Cardiac septum (tissue), 1 donor: ENCODE measurements at regions of chr3 and their contacts with region 1.

Region 1: DNA sequence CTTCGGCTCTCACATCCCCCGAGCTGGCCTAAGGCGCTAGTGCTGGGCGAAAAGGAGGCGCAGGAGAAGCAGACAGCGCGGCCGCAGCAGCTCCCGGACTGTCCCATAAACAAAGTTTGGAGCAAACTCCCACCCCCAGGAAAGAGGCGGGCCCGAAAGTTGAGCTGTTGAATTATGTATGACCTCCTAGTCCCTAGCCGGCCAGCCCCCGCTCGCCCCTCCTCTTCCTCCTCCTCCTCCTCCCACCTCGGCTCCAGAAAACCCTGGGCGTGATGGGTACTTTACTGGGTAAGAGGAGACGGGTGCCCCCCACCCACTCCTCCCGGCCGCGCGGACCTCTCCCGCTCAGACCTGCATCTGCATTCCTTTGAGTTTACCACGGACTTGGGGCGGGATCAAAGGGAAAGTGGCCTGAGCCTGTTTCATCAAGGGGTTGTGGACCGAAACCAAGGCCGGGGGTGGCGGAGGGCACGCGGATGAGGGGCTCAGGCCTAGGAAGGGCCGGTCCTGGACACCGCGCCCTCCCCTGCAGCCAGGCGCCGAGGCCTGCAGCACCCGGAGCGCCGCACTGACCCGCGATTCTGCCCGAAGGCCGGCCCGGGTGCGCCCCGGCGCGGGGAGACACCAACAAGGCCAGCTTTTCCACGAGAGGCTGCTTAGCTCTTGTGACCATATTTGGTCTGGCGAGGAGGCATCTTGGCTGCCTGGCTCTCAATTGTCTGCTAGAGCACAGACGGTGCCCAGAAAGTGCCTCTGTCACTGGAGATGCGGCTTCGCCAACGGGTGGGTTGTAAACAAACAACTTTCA is at the start of gene WWTR1:
- DNase-seq: peak; percentile 96
- total RNA-seq, gene WWTR1: 82.7 TPM

Region 2: GRCh38 chr3:149366941-149367840 is 290.9 kb before region 1 on chr3:
- intact Hi-C with region 1: no loop called
- DNase-seq: no peak

Region 3: DNA sequence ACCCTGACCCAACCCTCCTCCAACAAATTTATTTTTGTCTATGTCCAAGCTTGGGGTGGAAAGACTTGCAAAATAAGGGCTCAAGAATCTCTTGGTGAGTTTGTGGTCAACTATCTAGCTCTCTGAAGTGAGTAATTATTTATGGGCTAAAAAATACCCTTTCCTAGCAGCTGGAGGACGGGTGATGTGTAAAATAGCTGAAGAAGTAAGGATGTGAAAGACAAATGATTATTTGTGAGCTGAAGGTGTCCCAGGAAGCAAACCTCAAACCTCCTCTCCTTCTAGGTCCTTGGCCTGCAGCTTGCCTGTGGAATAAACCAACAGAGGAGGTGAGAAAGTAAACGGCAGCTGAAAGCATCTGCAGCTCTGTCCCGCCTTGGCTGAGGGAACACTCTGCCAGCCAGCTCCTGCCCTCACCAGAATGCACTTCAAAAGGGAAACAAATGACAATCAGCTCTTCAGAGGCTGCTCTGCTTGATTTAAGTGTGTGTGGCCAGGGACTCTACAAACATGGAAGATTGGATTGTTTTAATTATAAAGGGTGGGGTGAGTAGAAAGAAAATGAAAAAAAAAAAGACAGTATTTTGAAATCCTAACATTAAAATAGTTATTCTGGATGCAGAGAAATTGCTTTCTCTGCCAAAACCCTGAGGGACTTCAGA is 123.3 kb before region 1 on chr3:
- intact Hi-C with region 1: loop called (anchors 5 kb)
- DNase-seq: no peak

Region 4: GRCh38 chr3:149575961-149576564 is 82.1 kb before region 1 on chr3:
- intact Hi-C with region 1: loop called (anchors 2 kb)
- DNase-seq: no peak

Region 5: DNA sequence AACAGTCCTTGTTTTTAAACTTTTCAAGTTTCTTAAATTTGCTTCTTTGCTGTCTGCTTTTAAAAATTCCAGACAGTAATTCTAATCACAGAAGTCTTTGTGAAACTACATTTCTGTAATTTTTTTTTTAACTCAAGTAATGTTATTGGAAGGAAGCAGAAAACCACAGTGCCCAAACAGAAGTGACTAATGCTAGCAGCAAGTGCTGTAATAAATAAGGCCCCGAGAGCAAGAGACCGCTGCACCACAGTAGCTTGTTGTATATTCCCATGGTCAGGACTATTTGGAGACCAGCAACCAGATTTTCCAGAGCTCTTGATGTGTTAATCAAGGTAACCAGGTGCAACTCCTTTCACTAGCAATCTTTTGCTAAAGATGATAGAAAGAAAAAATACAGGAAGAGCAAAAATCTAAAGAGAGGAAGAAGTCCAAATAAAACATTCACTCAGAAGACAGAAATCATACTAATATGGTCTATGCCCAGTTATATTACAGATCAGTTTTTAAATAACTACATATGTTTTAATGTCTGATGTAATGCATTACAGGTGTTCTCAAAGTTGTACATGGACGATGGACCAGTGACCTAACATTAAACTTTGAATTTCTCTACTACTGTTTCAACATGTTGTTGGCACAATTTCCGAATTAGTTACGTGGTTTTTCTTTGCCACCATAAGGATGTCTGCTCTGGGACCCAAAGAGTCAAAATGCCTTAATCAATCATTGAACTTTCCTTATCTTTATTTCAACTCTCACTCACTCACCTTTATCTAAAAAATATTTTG is 36.7 kb before region 1 on chr3:
- intact Hi-C with region 1: loop called (anchors 2 kb)
- DNase-seq: no peak

Region 6: DNA sequence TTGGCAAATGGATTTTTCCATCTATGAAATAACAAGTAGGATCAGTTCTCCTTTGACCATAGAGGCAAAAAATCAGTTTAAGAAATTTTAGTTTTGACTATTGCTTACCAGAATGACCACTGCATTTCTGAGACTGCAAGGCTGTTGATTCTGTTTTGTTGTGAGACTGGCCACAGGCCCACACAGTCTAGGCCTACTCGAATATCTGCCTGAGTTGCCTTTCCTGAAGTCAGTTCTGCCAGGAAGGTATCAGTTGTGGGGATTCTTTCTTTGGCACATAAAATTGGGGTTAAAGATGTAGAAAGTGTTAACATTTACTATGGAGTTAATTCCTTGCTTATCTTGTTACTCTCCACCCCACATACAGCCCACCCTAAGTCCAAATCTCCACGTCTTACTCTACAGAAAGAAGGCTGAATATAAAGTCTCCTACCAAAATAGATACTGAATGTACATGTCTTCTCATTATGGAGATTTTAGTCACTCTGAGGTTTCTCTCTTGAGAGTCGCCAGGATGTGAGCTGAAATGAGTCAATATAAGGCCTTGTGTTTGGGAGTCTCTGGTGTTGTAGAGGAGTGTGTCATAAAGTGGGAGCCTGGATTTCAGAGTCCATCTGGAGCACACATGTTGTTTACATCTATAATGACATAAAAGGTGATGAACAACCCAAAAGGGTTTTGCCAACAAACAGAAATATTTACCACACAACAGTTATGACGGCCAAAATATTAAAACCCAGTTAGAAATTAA is 44.7 kb after region 1 on chr3:
- intact Hi-C with region 1: loop called (anchors 5 kb)
- DNase-seq: no peak

Region 7: GRCh38 chr3:149717391-149718056 is 59.4 kb after region 1 on chr3:
- intact Hi-C with region 1: loop called (anchors 5 kb)
- DNase-seq: no peak